IMR-90 (cell line): ENCODE measurements at regions of chr3 and their contacts with region 1.

Region 1: DNA sequence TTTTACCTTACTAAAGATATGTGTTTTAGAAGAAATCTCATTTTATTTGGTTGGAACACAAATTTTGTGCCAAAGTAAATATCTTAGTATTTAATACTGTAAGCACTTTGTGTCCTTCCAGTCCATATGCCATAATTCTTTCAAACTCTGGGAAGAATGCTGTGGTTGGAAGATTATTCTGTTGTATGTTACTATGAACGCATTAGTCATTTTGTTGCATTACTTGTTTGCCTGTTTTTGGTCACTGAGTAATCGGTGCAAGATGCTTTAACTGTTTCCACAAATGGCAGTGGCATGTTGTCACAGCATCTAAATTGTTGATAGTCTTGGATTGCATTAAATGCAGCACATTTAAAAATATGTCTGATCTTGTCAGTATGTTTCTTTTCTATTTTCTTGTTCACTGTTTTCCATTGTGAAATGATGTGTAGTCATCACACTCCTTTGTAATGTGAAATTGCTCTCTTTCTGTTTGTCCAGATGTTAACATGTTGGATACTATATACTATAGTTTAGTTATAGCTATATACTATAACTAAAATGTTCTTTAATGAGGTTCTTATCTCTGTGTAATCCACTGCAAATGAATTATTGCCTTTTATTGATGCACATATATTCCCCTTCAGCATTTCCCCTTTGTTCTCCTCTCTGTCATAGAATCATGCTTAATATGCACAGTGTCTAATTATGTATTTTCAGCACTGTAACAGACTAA is 89.9 kb upstream of the FLNB start:
- DNase-seq: peak; percentile 87
- ATAC-seq: peak; percentile 93
- H3K4me3 ChIP-seq: no peak overlapping the region
- H3K27ac ChIP-seq: no peak overlapping the region; the same call in 1 of the 2 replicates
- H3K4me1 ChIP-seq: peaks cover 2% of the 10 kb centered on the region; the same call in 1 of the 2 replicates
- H3K27me3 ChIP-seq: no peaks in the 10 kb centered on the region
- CTCF ChIP-seq: no peak
- POLR2A ChIP-seq: no peak
- RAD21 ChIP-seq: no peak

Region 2: GRCh38 chr3:57877116-57877515 is 41.2 kb before region 1 on chr3:
- CTCF ChIA-PET with region 1: no interaction called
- POLR2A ChIA-PET with region 1: no interaction called
- dilution Hi-C with region 1: no loop called
- in situ Hi-C with region 1: no loop called
- intact Hi-C with region 1: loop called (anchors 5 kb)
- DNase-seq: peak; percentile 89
- ATAC-seq: peak; percentile 93
- H3K4me3 ChIP-seq: no peak overlapping the region
- H3K27ac ChIP-seq: no peak overlapping the region
- H3K4me1 ChIP-seq: peaks cover 3% of the 10 kb centered on the region
- H3K27me3 ChIP-seq: no peaks in the 10 kb centered on the region
- CTCF ChIP-seq: no peak
- POLR2A ChIP-seq: no peak
- RAD21 ChIP-seq: no peak